Heart left ventricle (tissue), 16 donors: ENCODE measurements at regions of chr1 and their contacts with region 1.

Region 1: GRCh38 chr1:9101510-9102146 is 27.3 kb downstream of the GPR157 start:
- DNase-seq: peak in 2 of 5 donors; percentile 35 to 41
- ATAC-seq: peak; percentile 48 to 73 (median 68)
- H3K4me3 ChIP-seq: no peak overlapping the region
- H3K27ac ChIP-seq: no peak overlapping the region
- H3K4me1 ChIP-seq: peaks cover 0 to 17% (median 0%) of the 10 kb centered on the region in 12 donors
- H3K27me3 ChIP-seq: no peaks in the 10 kb centered on the region
- CTCF ChIP-seq: peak; percentile 17 to 69 (median 58)
- POLR2A ChIP-seq: no peak

Region 2: GRCh38 chr1:8497210-8497801 is 604.3 kb before region 1 on chr1:
- intact Hi-C with region 1: no loop called
- DNase-seq: no peak
- ATAC-seq: peak in 3 of 4 donors; percentile 34 to 74 (median 49)
- H3K4me3 ChIP-seq: no peak overlapping the region
- H3K27ac ChIP-seq: peak overlapping the region in 6 of 12 donors; percentile 3 to 46 (median 29)
- H3K4me1 ChIP-seq: peaks cover 0 to 31% (median 8%) of the 10 kb centered on the region in 12 donors
- H3K27me3 ChIP-seq: no peaks in the 10 kb centered on the region
- CTCF ChIP-seq: no peak
- POLR2A ChIP-seq: no peak

Region 3: DNA sequence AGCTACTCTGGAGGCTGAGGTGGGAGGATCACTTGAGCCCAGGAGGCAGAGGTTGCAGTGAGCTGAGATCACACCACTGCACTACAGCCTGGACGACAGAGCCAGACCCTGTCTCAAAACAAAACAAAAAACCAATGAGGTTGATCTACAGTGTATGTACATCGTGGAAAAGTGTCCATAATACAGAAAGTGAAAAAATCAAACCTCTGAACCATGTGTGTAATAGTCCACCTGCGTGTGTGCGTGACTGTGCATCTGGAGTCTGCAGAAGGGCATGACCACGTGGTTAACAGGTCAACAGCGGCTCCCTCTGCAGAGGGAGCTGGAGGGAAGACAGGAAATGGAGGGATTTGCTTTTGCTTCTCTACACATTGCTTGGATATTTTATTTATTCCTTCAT is 190.7 kb before region 1 on chr1:
- intact Hi-C with region 1: loop called in 8 of 10 experiments (anchors 5 to 10 kb)
- DNase-seq: no peak
- ATAC-seq: no peak
- H3K4me3 ChIP-seq: no peak overlapping the region
- H3K27ac ChIP-seq: no peak overlapping the region
- H3K4me1 ChIP-seq: peaks cover 0 to under 1% (median 0%) of the 10 kb centered on the region in 12 donors
- H3K27me3 ChIP-seq: no peaks in the 10 kb centered on the region
- CTCF ChIP-seq: no peak
- POLR2A ChIP-seq: no peak

Region 4: DNA sequence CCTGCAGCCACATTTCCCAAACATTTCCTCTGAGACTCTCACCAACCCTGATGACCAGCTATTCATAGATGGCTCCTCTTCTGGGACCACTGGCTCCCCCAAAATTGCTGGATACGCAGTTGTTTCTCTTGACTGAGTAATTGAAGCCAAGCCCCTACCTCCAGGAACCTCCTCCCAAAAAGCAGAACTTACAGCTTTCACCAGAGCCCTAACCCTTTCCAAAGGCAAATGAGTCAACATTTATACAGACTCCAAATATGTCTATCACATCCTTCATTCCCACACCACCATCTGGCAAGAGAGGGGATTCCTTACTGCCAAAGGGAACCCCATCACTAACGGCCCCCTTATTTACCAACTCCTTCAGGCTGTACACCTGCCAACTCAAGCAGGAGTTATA is 176.2 kb before region 1 on chr1:
- intact Hi-C with region 1: loop called in 1 of 10 experiments (anchors 5 kb)
- DNase-seq: no peak
- ATAC-seq: no peak
- H3K4me3 ChIP-seq: no peak overlapping the region
- H3K27ac ChIP-seq: no peak overlapping the region
- H3K4me1 ChIP-seq: no peaks in the 10 kb centered on the region
- H3K27me3 ChIP-seq: no peaks in the 10 kb centered on the region
- CTCF ChIP-seq: no peak
- POLR2A ChIP-seq: no peak

Region 5: DNA sequence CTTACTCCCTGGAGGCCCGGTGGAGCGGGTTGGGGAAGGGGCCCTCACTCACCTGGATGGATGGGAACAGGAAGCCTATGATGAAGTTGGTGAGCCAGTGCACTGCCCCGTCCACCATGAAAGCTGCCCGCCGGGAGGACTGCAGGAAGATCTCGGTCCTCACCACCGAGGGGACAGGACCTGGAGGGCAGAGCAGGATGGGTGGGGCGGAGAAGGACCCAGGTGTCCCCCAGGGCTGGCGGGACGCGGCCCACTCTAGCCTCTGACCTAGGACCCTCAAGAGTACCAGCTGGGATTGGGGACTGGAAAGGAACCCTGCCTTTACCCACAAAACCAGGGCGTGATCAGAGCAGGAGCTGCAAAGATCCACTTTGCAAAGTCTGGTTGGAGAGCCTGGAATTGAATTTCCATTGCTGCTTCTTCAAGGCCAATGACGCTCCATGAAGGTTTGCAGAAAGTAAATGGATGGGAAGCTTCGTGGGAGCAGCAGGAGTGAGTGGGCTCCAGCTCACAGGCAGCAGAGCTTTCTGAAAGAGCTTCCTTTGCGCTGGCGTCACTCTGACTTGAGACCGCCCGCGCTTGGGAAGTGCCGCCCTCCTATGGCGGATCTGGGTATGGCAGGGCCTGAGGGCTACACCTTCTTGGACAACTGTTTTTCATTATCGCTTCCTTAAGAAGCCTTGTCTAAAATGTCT is 96.8 kb before region 1 on chr1:
- intact Hi-C with region 1: loop called (anchors 1 to 5 kb)
- DNase-seq: peak; percentile 62 to 84 (median 75)
- ATAC-seq: peak; percentile 46 to 92 (median 82)
- H3K4me3 ChIP-seq: no peak overlapping the region
- H3K27ac ChIP-seq: no peak overlapping the region
- H3K4me1 ChIP-seq: peaks cover 0 to 8% (median 0%) of the 10 kb centered on the region in 12 donors
- H3K27me3 ChIP-seq: no peaks in the 10 kb centered on the region
- CTCF ChIP-seq: peak; percentile 90 to 97 (median 93)
- POLR2A ChIP-seq: no peak

Region 6: DNA sequence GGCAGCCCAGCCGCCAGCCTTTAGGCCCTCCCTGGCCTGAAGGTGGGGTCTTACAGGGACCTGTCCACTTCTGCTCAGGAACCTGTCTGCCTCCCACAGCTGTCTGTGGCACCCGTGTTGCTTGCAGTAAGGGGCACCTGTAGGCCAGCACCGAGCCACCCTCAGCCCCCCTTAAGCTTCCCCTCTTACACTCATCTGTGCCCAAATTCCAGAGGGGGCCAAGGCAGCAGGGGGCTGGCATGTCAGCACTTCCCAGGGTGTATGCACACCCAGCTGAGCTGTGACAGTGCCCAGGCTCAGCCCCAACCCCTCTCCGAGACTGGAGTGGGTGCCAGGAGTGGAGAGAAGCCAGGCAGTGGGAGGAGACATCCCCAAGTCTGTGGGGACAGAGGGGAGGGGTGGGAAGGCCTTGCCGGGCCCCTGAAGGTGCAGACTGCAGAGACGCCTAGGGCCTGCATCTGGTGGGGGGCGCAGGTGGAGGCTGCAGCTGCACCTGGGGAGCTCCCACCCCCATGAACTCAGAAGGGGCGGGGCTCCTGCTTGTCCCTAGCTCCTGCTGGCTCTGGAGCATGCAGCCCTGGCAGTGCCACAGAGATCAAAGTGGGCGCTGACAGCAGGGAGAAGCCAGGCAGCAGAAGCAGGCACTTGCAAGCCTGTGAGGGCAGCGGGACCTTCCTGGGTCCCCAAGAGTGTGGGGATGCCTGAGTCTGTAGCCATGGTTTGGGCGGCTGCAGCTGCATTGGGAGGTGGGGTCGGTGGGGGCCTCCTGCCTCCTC is 70.0 kb before region 1 on chr1:
- intact Hi-C with region 1: loop called in 2 of 10 experiments (anchors 5 to 10 kb)
- DNase-seq: peak; percentile 55 to 86 (median 75)
- ATAC-seq: peak; percentile 86 to 94 (median 94)
- H3K4me3 ChIP-seq: peak overlapping the region in 3 of 12 donors; percentile 2 to 34 (median 2)
- H3K27ac ChIP-seq: peak overlapping the region in 8 of 12 donors; percentile 13 to 72 (median 40)
- H3K4me1 ChIP-seq: peaks cover 0 to 4% (median 0%) of the 10 kb centered on the region in 12 donors
- H3K27me3 ChIP-seq: no peaks in the 10 kb centered on the region
- CTCF ChIP-seq: no peak
- POLR2A ChIP-seq: no peak

Region 7: DNA sequence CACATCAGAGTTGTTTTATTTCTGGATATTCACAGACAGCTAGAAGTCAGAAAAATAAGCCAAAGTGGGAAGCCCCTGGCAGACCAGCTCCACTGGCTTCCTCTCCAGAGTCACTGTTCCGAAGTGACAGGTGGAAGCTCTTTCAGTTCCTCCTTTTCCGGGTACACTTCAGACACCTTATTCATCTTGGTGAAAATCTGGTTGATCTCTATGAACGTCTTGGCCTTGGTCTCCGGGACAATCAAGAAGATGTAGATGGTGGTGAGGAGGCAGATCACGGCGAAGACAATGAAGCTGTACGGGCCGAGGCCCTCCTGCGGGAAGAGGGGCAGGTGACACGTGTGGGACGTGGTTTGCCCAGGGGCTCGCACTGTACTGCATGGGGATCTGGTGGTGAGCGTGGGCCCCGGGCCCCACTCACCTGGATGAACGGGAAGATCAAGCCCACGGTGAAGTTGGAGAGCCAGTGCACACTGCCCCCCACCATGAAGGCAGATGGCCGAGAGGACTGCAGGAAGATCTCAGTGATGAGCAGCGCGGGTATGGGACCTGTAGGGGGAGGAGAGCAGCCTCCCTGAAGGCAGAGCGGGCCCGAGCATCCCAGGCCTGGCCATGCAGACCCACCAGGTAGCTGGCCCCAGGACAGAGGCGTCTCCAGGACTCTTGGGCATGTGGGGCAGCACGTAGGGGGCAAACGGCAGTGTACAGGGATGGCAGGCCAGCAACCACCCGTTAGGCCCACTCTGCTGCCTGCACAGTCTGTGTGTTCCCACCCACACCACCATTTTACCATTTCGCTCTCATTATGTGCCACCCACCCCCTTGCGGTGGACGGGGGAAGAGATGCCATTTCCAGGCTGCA is 63.9 kb before region 1 on chr1:
- intact Hi-C with region 1: loop called in 2 of 10 experiments (anchors 5 to 10 kb)
- DNase-seq: no peak
- ATAC-seq: no peak
- H3K4me3 ChIP-seq: no peak overlapping the region
- H3K27ac ChIP-seq: no peak overlapping the region
- H3K4me1 ChIP-seq: no peaks in the 10 kb centered on the region
- H3K27me3 ChIP-seq: peaks cover 0 to 9% (median 0%) of the 10 kb centered on the region in 9 donors
- CTCF ChIP-seq: no peak
- POLR2A ChIP-seq: no peak

Region 8: GRCh38 chr1:9145021-9145668 is 43.5 kb after region 1 on chr1:
- intact Hi-C with region 1: no loop called
- DNase-seq: peak in 1 of 5 donors; percentile 26
- ATAC-seq: no peak
- H3K4me3 ChIP-seq: no peak overlapping the region
- H3K27ac ChIP-seq: no peak overlapping the region
- H3K4me1 ChIP-seq: peaks cover 0 to 30% (median 12%) of the 10 kb centered on the region in 12 donors
- H3K27me3 ChIP-seq: no peaks in the 10 kb centered on the region
- CTCF ChIP-seq: no peak
- POLR2A ChIP-seq: no peak